Activated naive CD4-positive, alpha-beta T cell treated with anti-CD3 and anti-CD28 coated beads for 36 hours (primary cell): ENCODE measurements at regions of chr17 and their contacts with region 1.

Region 1: GRCh38 chr17:38428112-38428642 is at the start of gene ARHGAP23:
- DNase-seq: peak; percentile 31
- H3K4me3 Mint-ChIP-seq: peak within 1 kb of the TSS; percentile 63
- H3K27ac Mint-ChIP-seq: no peak within 1 kb of the TSS
- H3K4me1 Mint-ChIP-seq: peaks cover 6% of the 10 kb centered on the region
- H3K27me3 Mint-ChIP-seq: peaks cover 20% of the 10 kb centered on the region
- total RNA-seq, gene ARHGAP23: 0.52 to 1.0 TPM

Region 2: DNA sequence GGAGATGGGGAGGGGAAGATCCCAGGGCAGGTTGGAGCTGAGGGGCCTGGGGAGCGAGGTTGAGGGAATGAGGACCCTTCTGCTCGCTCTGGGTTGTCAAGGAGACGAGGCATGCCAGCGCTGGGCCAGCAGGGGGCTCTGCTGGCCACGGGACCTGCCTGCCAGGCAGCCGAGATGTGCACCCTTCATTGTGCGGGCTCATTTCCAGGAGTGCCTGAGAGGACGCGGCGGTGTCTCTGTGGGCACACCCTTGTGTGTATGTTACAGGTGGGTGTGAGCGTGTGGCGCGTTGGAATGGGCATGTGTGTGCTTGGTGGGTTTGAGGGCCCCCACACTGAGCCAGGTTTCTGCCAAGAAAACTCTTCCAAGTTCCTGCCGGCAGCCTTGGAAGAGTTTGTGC is 16.0 kb after region 1 on chr17:
- CTCF ChIA-PET with region 1: interaction called, 3 read pairs
- intact Hi-C with region 1: loop called (anchors 1 kb)
- DNase-seq: peak; percentile 73
- H3K4me3 Mint-ChIP-seq: no peak overlapping the region
- H3K27ac Mint-ChIP-seq: no peak overlapping the region
- H3K4me1 Mint-ChIP-seq: peaks cover 3% of the 10 kb centered on the region
- H3K27me3 Mint-ChIP-seq: no peaks in the 10 kb centered on the region

Region 3: DNA sequence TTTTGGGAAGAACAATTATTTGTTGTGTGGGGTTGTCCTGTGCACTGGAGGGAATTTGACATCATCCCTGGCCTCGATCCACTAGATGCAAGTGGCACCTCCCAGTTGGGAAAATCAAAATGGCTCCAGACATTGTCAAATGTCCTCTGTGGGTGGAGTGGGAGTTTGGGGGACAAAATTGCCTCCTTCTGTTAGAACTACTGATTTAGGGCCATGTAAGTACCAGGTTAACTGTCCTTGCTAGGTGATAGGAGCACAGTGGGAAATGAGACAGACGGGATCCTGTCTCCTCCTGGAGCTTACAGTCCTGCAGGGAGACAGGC is 56.9 kb after region 1 on chr17:
- CTCF ChIA-PET with region 1: interaction called, 7 read pairs
- intact Hi-C with region 1: loop called (anchors 1 kb)
- DNase-seq: no peak
- H3K4me3 Mint-ChIP-seq: no peak overlapping the region
- H3K27ac Mint-ChIP-seq: no peak overlapping the region
- H3K4me1 Mint-ChIP-seq: no peaks in the 10 kb centered on the region
- H3K27me3 Mint-ChIP-seq: no peaks in the 10 kb centered on the region

Region 4: GRCh38 chr17:38584350-38584925 is 156.3 kb after region 1 on chr17:
- CTCF ChIA-PET with region 1: no interaction called
- intact Hi-C with region 1: loop called (anchors 10 kb)
- DNase-seq: peak; percentile 71
- H3K4me3 Mint-ChIP-seq: no peak overlapping the region
- H3K27ac Mint-ChIP-seq: no peak overlapping the region
- H3K4me1 Mint-ChIP-seq: peaks cover 4% of the 10 kb centered on the region
- H3K27me3 Mint-ChIP-seq: peaks cover 57% of the 10 kb centered on the region